A673 (cell line): ENCODE measurements at regions of chr15 and their contacts with region 1.

Region 1: GRCh38 chr15:51883438-51883837 is 54.0 kb downstream of the TMOD3 start:
- DNase-seq: peak; percentile 75
- H3K4me3 ChIP-seq: no peak overlapping the region
- H3K27ac ChIP-seq: no peak overlapping the region
- H3K4me1 ChIP-seq: peaks cover 43% of the 10 kb centered on the region
- H3K27me3 ChIP-seq: no peaks in the 10 kb centered on the region
- CTCF ChIP-seq: no peak

Region 2: DNA sequence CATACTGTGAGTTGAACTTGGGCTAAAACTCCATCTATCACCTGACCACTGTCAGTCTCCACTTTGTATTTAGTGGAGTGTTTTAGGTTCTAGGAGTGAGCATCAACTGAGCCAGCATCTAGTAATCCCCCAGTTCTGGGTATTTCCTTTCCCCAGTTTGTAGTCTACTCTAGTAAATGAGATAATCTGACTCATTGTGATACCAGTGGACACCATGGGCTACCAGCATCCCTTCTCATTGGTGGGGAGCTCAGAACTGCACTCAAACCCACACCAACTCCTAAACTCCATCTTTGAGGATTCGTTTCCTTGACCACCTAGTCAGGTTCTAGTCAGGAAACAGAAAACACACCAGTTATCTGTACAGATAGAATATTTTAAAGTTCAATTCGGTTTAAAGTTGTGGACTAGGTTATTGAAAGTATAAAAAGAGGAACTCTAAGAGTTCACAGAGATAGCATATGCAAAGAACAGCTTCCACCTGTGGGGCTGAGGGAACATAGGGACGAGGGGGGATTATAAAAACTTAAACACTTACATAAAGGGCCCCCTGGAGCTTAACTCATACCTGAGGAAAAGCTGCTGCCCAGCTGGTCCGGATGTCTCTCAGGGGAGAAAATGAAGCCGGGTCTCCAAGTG is 52.1 kb after region 1 on chr15:
- CTCF ChIA-PET with region 1: no interaction called
- POLR2A ChIA-PET with region 1: interaction called, 11 read pairs
- intact Hi-C with region 1: no loop called
- DNase-seq: no peak
- H3K4me3 ChIP-seq: no peak overlapping the region
- H3K27ac ChIP-seq: no peak overlapping the region
- H3K4me1 ChIP-seq: no peaks in the 10 kb centered on the region
- H3K27me3 ChIP-seq: no peaks in the 10 kb centered on the region
- CTCF ChIP-seq: no peak

Region 3: GRCh38 chr15:51982013-51982769 is 98.8 kb after region 1 on chr15:
- CTCF ChIA-PET with region 1: no interaction called
- POLR2A ChIA-PET with region 1: no interaction called
- intact Hi-C with region 1: no loop called
- DNase-seq: peak; percentile 88
- H3K4me3 ChIP-seq: peak overlapping the region; percentile 10
- H3K27ac ChIP-seq: peak overlapping the region; percentile 3
- H3K4me1 ChIP-seq: peaks cover 5% of the 10 kb centered on the region
- H3K27me3 ChIP-seq: no peaks in the 10 kb centered on the region
- CTCF ChIP-seq: peak; percentile 66